HepG2 (cell line): ENCODE measurements at regions of chr17 and their contacts with region 1.

Region 1: DNA sequence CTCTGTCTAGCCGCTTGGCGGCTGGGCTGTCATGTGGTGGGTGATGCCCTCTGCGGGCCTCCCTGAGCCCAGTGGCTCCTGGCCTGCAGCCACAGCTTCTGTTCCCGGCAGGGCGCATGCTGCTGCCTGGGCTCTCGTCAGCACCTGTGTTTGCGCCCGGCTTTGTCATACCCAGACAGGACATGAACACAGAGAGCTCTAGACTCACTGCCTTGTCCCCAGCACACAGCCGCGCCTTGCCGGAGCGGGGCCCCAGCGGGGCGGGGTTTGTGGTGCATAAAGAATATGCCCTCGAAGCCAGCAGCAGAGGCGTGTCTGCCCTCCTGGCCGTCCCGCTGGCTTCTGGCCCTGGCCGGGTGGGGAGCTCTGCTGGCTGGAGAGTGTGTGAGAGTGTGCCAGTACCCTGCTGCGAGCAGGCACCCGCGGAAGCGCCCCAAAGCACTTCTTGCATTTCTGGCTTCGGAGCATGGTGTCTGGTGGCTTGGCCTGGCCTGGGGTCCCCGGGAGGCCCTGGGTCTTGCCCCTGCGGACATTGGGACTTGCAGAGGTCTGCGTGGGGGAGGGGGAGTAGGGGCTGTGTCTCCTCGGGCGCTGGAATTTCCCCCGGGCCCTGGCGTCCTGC is 14.4 kb downstream of the ASPSCR1 start:
- DNase-seq: peak; percentile 98
- ATAC-seq: peak; percentile 66
- H3K4me3 ChIP-seq: peak overlapping the region; percentile 29 to 69 (median 44)
- H3K27ac ChIP-seq: peak overlapping the region; percentile 97
- H3K4me1 ChIP-seq: peaks cover 70% of the 10 kb centered on the region
- H3K27me3 ChIP-seq: no peaks in the 10 kb centered on the region
- CTCF ChIP-seq: peak; percentile 77
- EP300 ChIP-seq: peak; percentile 3 to 66; a peak in 3 of 4 replicates
- POLR2A ChIP-seq: peak in 1 of 2 experiments; percentile 92; a peak in 2 of 4 replicates
- RAD21 ChIP-seq: peak; percentile 88

Region 2: DNA sequence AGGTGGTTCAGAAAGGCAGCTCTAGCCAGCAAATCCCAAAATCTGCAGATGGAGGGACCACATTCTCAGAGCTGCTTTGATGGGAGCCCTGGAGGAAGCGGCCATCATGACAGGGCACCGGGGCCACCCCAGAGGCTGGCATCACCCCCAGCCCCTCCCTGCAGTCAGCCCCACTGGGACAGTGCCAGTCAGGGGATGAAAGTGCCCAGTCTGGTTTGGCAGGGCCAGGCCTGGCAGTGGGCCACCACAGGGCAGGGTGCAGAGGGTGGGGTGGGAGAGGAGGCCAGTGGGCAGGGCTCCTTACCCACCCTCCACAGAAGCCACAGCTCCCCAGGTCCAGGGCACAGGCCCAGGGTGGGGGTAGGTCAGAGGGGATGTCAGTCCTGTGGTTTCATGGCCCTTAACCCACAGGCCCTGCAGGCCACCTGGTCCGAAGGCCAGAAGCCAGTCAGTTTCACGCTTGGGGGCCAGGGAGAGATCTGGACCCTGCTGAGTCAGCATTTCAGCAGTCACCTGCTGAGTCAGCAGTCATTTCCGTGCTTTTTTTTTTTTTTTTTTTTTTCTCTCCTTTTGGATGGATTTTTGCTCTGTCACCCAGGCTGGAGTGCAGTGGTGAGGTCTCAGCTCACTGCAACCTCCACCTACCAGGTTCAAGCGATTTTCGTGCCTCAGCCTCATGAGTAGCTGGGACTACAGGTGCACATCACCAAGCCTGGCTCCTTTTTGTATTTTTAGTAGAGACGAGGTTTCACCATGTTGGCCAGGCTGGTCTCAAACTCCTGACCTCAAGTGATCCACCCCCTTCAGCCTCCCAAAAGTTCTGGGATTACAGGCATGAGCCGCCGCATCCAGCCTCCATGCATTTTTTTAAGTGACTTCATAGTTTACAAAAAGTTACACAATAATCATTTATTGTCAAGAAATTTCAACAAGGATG is 269.3 kb before region 1 on chr17:
- CTCF ChIA-PET with region 1: no interaction called
- POLR2A ChIA-PET with region 1: interaction called, 12 read pairs
- in situ Hi-C with region 1: no loop called
- intact Hi-C with region 1: no loop called
- DNase-seq: no peak
- ATAC-seq: peak; percentile 20
- H3K4me3 ChIP-seq: no peak overlapping the region
- H3K27ac ChIP-seq: peak overlapping the region; percentile 31
- H3K4me1 ChIP-seq: peaks cover 33% of the 10 kb centered on the region
- H3K27me3 ChIP-seq: no peaks in the 10 kb centered on the region
- CTCF ChIP-seq: no peak
- EP300 ChIP-seq: no peak
- POLR2A ChIP-seq: peak; percentile 16 to 81; a peak in 2 of 4 replicates
- RAD21 ChIP-seq: 0 out of 2 replicates have a peak, but pooled peaks have one; percentile 13

Region 3: DNA sequence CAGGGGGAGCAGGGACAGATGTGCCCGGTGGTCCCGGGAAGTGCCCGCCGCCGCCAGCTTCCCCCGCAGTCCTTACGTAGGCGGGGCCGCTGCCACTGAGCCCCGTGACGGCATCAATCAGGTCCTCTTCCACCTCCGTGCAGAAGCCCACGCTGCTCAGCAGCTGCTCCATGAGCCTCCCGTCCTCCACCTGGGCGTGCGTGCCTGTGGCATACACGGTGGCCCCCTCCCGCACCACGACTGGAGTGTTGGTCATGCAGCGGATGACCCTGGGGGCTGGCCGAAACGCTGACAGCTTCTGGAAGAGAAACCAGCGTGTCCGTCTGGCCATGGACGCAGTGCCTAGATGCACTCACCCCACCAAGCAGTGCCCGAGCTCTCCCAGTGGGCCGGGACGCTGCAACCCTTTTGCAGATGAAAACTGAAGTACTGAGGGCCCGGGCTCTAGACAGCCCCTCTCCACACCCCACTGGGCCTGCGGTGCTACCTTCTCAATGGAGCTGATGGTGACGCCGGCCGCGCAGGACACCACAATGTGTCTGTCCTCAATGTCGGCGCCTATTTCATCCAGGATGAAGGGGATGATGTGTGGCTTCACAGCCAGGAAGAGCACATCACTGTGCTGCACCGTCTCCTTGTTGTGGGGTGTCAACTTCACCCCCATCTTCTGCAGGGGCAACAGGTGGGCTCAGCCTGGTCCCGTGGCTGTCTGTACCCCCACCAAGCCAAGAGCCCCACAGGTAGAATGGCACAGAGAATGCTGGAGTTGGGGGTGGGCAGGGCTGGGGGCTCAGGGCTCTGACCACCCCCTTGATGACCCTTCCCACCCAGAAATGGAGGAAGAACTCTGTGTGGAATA is 56.7 kb before region 1 on chr17:
- CTCF ChIA-PET with region 1: no interaction called
- POLR2A ChIA-PET with region 1: interaction called, 13 read pairs
- in situ Hi-C with region 1: no loop called
- intact Hi-C with region 1: no loop called
- DNase-seq: no peak
- ATAC-seq: no peak
- H3K4me3 ChIP-seq: peak overlapping the region in 1 of 3 experiments; percentile 88; a peak in 2 of 6 replicates
- H3K27ac ChIP-seq: no peak overlapping the region
- H3K4me1 ChIP-seq: peaks cover 58% of the 10 kb centered on the region
- H3K27me3 ChIP-seq: peaks cover 9 to 21% of the 10 kb centered on the region in 2 experiments; a peak in 4 of 5 replicates
- CTCF ChIP-seq: no peak
- EP300 ChIP-seq: no peak
- POLR2A ChIP-seq: no peak
- RAD21 ChIP-seq: no peak

Region 4: DNA sequence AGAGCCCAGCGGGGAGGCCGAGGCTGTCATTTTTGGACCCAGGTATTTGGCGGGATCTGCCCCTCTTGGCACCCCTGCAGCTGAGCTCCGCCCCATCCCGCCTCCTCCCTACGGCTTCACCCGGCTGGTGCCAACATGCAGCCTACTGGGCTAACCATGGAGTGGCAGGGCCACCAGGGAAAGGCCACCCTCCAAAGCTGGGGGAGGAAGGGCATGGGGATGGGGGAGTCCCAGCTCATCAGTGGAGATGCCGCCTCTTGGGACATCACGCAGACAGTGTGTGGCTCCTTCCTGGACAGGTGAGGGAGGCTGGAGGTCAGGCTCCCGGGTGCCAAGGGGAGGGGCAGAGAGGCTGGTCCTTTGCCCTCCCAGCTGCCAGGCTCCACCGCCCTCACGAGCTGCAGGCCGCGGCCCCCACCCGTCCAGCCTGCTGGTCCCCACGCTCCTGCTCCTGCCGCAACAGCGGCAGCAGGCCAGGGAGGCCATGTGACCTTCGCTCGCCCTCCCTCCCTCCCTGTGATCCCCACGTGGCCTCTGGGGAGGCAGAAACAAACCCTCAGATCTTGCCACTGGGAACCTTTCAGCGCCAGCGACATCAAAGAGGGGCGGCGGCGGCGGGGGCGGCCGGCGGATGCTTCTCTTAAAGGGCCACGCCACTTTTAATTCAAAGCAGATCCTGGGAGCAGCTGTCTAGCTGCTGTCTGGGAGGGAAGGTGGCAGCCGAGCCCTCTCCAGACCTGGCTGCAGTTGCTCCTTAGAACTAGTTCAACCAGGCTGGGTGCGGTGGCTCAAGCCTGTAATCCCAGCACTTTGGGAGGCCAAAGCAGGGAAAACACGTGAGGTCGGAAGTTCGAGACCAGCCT is 24.0 kb before region 1 on chr17:
- CTCF ChIA-PET with region 1: no interaction called
- POLR2A ChIA-PET with region 1: interaction called, 406 read pairs
- in situ Hi-C with region 1: no loop called
- intact Hi-C with region 1: no loop called
- DNase-seq: peak; percentile 98
- ATAC-seq: peak; percentile 79
- H3K4me3 ChIP-seq: peak overlapping the region; percentile 44 to 74 (median 48)
- H3K27ac ChIP-seq: peak overlapping the region; percentile 75
- H3K4me1 ChIP-seq: peaks cover 70% of the 10 kb centered on the region
- H3K27me3 ChIP-seq: no peaks in the 10 kb centered on the region
- CTCF ChIP-seq: peak; percentile 49
- EP300 ChIP-seq: peak in 1 of 2 experiments; percentile 90; a peak in 3 of 4 replicates
- POLR2A ChIP-seq: peak in 1 of 2 experiments; percentile 41; a peak in 1 of 4 replicates
- RAD21 ChIP-seq: 0 out of 2 replicates have a peak, but pooled peaks have one; percentile 14

Region 5: DNA sequence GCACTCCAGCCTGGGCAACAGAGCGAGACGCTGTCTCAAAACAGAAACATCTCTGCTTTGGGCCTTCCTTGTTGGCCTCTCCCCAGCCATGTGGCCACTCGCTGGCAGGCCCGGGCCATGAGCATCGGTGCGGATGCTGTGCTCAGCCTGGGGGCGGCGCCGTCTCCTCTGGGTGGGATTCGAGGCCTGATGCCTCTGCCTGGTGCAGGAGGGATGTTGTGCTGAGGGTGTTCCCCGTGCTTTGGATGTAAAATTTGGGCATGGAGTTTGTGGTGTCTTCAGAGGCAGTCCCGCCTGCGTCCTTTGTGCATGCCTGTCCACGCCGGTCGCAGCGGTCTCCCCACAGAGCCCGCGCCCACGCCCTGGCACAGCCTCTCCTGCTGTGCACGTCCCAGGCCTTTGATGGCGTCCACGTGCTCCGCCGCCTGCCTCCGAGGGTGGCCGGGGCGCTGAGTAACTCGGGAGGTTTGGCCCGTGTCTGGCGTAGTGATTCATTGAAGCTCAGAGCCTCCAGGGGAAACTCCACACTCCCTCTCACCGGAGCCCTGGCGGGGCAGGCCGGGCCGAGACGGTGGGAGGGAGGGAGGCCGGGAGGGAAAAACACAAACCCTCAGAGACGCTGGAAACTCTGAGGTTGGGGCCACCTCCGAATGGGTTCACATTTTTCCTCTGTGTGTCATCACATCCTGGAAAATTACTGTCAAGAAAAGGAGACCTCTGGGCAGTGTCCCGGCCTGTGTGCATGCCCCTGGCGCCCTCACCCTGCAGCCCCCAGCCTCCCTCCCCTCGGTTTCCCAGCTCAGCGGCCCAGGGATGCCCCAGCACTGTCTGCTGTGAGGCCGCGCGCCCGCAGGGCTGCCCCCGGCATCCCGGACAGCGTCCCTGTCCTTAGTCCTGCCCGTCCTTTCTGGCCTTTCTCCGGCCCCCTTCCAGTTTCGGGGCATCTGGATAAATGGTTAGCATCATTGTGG is 11.9 kb after region 1 on chr17:
- CTCF ChIA-PET with region 1: interaction called, 3 read pairs
- POLR2A ChIA-PET with region 1: interaction called, 135 read pairs
- in situ Hi-C with region 1: no loop called
- intact Hi-C with region 1: loop called (anchors 1 kb)
- DNase-seq: peak; percentile 92
- ATAC-seq: peak; percentile 8
- H3K4me3 ChIP-seq: peak overlapping the region in 1 of 3 experiments; percentile 29; a peak in 1 of 6 replicates
- H3K27ac ChIP-seq: peak overlapping the region; percentile 95
- H3K4me1 ChIP-seq: peaks cover 76% of the 10 kb centered on the region
- H3K27me3 ChIP-seq: no peaks in the 10 kb centered on the region
- CTCF ChIP-seq: peak; percentile 51
- EP300 ChIP-seq: peak in 1 of 2 experiments; percentile 85; a peak in 2 of 4 replicates
- POLR2A ChIP-seq: no peak
- RAD21 ChIP-seq: no peak; the same call in 1 of the 2 replicates

Region 6: GRCh38 chr17:82120148-82120547 is 128.4 kb after region 1 on chr17:
- CTCF ChIA-PET with region 1: no interaction called
- POLR2A ChIA-PET with region 1: no interaction called
- in situ Hi-C with region 1: no loop called
- intact Hi-C with region 1: no loop called
- DNase-seq: no peak
- ATAC-seq: no peak
- H3K4me3 ChIP-seq: no peak overlapping the region
- H3K27ac ChIP-seq: no peak overlapping the region
- H3K4me1 ChIP-seq: peaks cover 52% of the 10 kb centered on the region
- H3K27me3 ChIP-seq: no peaks in the 10 kb centered on the region
- CTCF ChIP-seq: no peak
- EP300 ChIP-seq: no peak
- POLR2A ChIP-seq: no peak
- RAD21 ChIP-seq: no peak

Region 7: GRCh38 chr17:82200743-82201497 is 209.1 kb after region 1 on chr17:
- CTCF ChIA-PET with region 1: no interaction called
- POLR2A ChIA-PET with region 1: no interaction called
- in situ Hi-C with region 1: no loop called
- intact Hi-C with region 1: no loop called
- DNase-seq: no peak
- ATAC-seq: no peak
- H3K4me3 ChIP-seq: no peak overlapping the region
- H3K27ac ChIP-seq: no peak overlapping the region
- H3K4me1 ChIP-seq: peaks cover 12% of the 10 kb centered on the region
- H3K27me3 ChIP-seq: no peaks in the 10 kb centered on the region
- CTCF ChIP-seq: no peak
- EP300 ChIP-seq: no peak
- POLR2A ChIP-seq: no peak
- RAD21 ChIP-seq: no peak